ENCODE measurements at regions of chr3 and their contacts with region 1.

Region 1: GRCh38 chr3:60081381-60082095 is 1031.7 kb upstream of the CFAP20DC start:
- DNase-seq: no peak
- H3K4me3 ChIP-seq: no peak overlapping the region
- H3K27ac ChIP-seq: no peak overlapping the region
- H3K4me1 ChIP-seq: no peaks in the 10 kb centered on the region
- H3K27me3 ChIP-seq: no peaks in the 10 kb centered on the region
- CTCF ChIP-seq: no peak
- POLR2A ChIP-seq: no peak

Region 2: DNA sequence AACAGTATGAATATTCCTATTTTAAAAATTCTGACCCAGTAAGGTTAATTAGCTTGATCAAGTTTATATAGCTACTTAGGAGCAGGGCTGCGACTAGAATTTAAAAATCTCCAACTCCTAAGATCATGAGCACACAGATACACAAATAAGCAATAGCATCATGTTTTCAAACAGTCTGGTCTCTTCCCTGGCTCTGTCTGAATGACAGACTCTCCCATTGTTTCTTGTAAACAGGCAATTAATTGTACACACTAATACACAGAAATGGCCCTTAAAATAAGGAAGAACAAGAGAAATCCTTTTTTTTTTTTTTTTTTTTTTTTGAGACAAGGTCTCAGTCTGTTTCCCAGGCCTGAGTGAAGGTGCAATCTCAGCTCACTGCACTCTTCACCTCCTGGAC is 32.7 kb after region 1 on chr3:
- intact Hi-C with region 1: loop called (anchors 1 kb)
- DNase-seq: no peak
- H3K4me3 ChIP-seq: no peak overlapping the region
- H3K27ac ChIP-seq: no peak overlapping the region
- H3K4me1 ChIP-seq: no peaks in the 10 kb centered on the region
- H3K27me3 ChIP-seq: no peaks in the 10 kb centered on the region
- CTCF ChIP-seq: no peak
- POLR2A ChIP-seq: no peak

Measured in vagina (tissue), 2 donors.